Calu3 (cell line): ENCODE measurements at regions of chr1 and their contacts with region 1.

Region 1: GRCh38 chr1:151399890-151400495 is 620 bp downstream of the PSMB4 start:
- DNase-seq: no peak
- H3K4me3 Mint-ChIP-seq: peak overlapping the region; percentile 99
- H3K27ac Mint-ChIP-seq: peak overlapping the region; percentile 99
- H3K4me1 Mint-ChIP-seq: peaks cover 33% of the 10 kb centered on the region
- H3K27me3 Mint-ChIP-seq: no peaks in the 10 kb centered on the region
- CTCF ChIP-seq: no peak

Region 2: DNA sequence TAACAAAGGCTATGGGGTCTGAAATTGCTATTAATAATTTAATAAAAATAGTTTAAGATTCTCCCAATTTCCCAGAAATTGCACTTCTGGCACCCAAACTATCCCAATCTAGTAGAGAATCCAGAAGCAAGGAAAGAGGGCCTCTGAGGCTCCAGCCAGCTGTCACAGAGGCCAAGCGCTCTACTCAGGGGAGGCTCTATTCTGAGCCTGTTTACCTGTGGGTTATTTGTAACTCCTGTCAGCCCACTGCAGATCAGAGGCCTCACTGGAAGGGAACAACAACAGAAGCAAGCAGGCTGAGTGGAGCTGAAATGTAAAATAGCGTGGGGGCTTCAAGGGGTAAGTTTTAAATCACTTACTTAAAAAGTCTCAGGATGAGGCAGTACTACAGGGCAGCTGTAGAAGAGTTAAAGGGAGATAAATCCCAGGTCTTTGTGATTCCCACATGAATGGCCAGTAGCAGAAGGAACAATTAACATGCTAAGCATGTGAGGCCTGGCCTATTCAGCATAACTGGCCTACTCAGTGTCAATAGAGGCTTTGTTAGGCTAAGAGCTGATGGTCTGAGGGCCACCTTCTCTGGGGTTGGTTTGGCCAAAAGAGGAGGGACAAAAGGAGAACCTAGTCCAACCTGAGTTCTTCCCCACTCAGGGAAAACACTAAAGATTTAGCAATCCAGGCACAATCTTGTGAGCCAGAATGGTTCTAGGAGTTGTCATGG is 105.1 kb before region 1 on chr1:
- CTCF ChIA-PET with region 1: no interaction called
- intact Hi-C with region 1: loop called (anchors 2 kb)
- DNase-seq: no peak
- H3K4me3 Mint-ChIP-seq: no peak overlapping the region
- H3K27ac Mint-ChIP-seq: no peak overlapping the region
- H3K4me1 Mint-ChIP-seq: no peaks in the 10 kb centered on the region
- H3K27me3 Mint-ChIP-seq: no peaks in the 10 kb centered on the region
- CTCF ChIP-seq: no peak

Region 3: GRCh38 chr1:151361913-151362815 is 37.8 kb before region 1 on chr1:
- CTCF ChIA-PET with region 1: no interaction called
- intact Hi-C with region 1: no loop called
- DNase-seq: no peak
- H3K4me3 Mint-ChIP-seq: no peak overlapping the region
- H3K27ac Mint-ChIP-seq: no peak overlapping the region
- H3K4me1 Mint-ChIP-seq: no peaks in the 10 kb centered on the region
- H3K27me3 Mint-ChIP-seq: peaks cover 17% of the 10 kb centered on the region
- CTCF ChIP-seq: no peak

Region 4: GRCh38 chr1:151372061-151372934 is 27.7 kb before region 1 on chr1 and contains the start of gene SELENBP1:
- CTCF ChIA-PET with region 1: interaction called, 3 read pairs
- intact Hi-C with region 1: loop called (anchors 2 kb)
- DNase-seq: peak; percentile 66
- H3K4me3 Mint-ChIP-seq: peak within 1 kb of the TSS; percentile 41
- H3K27ac Mint-ChIP-seq: peak within 1 kb of the TSS; percentile 76
- H3K4me1 Mint-ChIP-seq: peaks cover 41% of the 10 kb centered on the region
- H3K27me3 Mint-ChIP-seq: peaks cover 15% of the 10 kb centered on the region
- CTCF ChIP-seq: no peak
- total RNA-seq, gene SELENBP1: 7.8 and 9.8 TPM in 2 replicates

Region 5: DNA sequence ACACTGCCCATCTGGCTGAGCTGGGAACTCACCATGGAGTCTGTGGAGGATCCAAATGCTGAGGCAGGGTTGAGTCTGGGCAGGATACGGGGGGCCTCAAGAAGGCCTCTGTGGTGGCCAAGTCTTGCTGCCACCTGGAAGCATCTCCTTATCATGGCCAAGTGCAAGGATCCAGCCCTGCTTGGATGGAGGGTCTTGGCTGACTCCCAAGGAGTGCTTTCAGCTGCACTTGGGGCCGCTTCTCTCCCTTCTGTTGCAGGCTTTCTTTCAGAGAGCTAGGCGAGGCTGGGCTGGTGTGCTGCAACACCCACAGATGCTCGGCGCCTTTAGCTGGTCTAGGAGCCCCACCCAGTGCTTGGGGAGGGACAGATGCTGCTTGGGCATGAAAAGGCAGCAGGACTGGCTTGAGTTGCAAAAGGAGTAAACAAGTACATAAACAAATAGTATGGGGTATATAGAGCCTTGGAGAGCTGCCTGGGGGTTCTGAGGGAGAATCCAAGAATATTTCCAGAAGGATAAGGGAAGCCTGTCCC is 453.5 kb after region 1 on chr1 and contains the start of gene THEM5:
- CTCF ChIA-PET with region 1: no interaction called
- intact Hi-C with region 1: no loop called
- DNase-seq: no peak
- H3K4me3 Mint-ChIP-seq: no peak within 1 kb of the TSS
- H3K27ac Mint-ChIP-seq: no peak within 1 kb of the TSS
- H3K4me1 Mint-ChIP-seq: no peaks in the 10 kb centered on the region
- H3K27me3 Mint-ChIP-seq: peaks cover 47% of the 10 kb centered on the region
- CTCF ChIP-seq: no peak
- total RNA-seq, gene THEM5: not detected in 2 replicates

Region 6: DNA sequence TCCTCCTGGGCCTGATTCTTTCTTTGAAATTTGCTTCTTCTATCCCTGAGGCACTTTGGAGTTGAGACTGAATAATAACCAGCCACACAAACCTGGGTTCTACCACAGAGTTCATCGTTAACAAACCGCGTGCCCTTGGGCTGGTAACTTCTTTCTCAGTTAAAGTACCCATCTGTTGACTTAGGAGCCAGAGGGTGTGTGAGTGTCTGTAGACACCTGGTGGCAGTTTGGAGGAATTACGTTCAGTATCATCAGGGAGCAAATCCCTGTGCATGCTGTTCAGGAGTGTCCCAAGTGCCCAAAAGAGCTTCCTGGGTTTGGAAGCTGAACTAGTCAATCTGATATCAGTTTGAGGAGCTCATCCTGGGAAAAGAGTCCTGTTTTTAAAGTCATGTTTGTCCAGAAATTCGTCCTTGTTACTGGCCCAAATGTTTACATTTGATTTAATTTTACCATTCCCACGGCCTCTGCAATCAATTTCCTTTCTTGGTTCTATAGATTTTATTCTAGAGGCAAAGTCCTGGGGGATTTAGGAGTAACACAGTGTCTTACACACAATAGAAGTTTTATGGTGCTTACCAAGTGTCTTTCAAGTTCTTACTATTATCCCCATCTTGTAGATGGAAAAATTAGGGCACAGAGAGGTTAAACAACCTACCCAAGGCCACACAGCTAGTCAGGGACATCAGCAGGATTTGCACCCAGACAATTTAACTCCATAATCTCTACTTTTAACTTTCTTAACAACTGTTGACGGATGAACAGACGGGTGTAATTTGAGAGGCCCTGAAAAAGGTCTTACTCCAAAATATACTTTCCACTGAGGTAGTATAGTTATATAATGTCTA is 785.8 kb after region 1 on chr1:
- CTCF ChIA-PET with region 1: no interaction called
- intact Hi-C with region 1: no loop called
- DNase-seq: peak; percentile 47
- H3K4me3 Mint-ChIP-seq: no peak overlapping the region
- H3K27ac Mint-ChIP-seq: no peak overlapping the region
- H3K4me1 Mint-ChIP-seq: peaks cover 22% of the 10 kb centered on the region
- H3K27me3 Mint-ChIP-seq: peaks cover 44% of the 10 kb centered on the region
- CTCF ChIP-seq: peak; percentile 93